Transverse colon (tissue), 4 donors: ENCODE measurements at regions of chr18 and their contacts with region 1.

Region 1: DNA sequence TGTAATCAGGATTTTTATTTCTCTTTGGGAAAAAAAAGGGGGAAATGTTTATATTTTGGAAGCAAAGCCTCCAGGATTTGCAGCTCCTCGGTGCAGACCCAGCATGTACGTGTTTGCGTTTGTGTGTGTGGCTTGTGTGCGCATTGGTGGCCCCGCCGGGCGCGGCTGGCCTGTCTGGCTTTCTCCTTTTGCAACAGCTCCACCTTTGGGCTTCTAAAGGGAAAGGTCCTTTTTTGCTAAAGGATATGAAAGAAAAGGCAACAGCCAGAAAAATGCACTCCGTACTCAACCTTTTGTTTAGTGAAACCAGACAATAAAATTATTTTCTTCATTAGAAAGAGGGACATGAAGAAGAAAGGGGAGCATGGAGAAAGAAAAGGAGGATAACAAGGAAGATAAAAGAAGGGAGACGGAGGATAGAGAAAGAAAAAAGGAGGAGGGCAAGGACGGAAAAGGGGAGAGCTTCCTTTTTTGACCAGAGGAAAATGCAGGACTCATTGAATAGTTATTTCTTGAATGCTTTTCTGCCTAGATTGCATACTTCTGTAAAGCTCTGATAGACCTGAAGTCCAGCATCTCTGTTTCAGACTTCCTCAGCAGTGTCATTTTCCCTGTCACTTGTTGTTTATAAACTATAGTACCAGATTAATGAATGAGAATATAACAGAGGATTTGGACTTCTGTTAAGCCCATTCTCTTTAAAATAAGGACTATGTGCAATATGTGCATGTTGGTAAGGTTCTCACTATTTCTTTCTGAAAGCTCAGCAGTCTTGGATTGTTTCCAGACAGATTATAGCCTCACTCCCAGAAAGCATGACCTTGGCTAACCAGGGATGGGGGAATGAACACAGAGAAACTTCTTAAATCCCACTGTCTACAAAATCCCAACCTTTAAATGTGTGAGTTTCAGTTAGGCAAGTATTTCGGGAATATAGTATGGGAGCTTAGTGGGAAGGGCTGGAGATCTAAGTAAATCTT is 563.1 kb upstream of the PIK3C3 start:
- DNase-seq: peak; percentile 16
- H3K4me3 ChIP-seq: peak overlapping the region in 1 of 4 donors; percentile 27
- H3K27ac ChIP-seq: no peak overlapping the region
- H3K4me1 ChIP-seq: no peaks in the 10 kb centered on the region
- H3K27me3 ChIP-seq: no peaks in the 10 kb centered on the region
- CTCF ChIP-seq: peak in 3 of 5 experiments; percentile 17 to 39 (median 36)
- EP300 ChIP-seq: no peak
- POLR2A ChIP-seq: no peak

Region 2: GRCh38 chr18:41436772-41437171 is 44.9 kb after region 1 on chr18:
- in situ Hi-C with region 1: no loop called
- intact Hi-C with region 1: loop called (anchors 2 kb)
- DNase-seq: no peak
- H3K4me3 ChIP-seq: no peak overlapping the region
- H3K27ac ChIP-seq: no peak overlapping the region
- H3K4me1 ChIP-seq: no peaks in the 10 kb centered on the region
- H3K27me3 ChIP-seq: no peaks in the 10 kb centered on the region
- CTCF ChIP-seq: no peak
- EP300 ChIP-seq: no peak
- POLR2A ChIP-seq: no peak